ENCODE measurements at regions of chr1 and their contacts with region 1.

Region 1: GRCh38 chr1:183023601-183024316 is 539 bp downstream of the LAMC1 start:
- DNase-seq: peak; percentile 73
- ATAC-seq: peak; percentile 32

Region 2: GRCh38 chr1:183110326-183110865 is 86.6 kb after region 1 on chr1:
- intact Hi-C with region 1: loop called (anchors 10 kb)
- DNase-seq: no peak
- ATAC-seq: no peak

Region 3: GRCh38 chr1:183520379-183520778 is 496.6 kb after region 1 on chr1:
- intact Hi-C with region 1: no loop called
- DNase-seq: no peak
- ATAC-seq: no peak